ENCODE measurements at regions of chr21 and their contacts with region 1.

Region 1: DNA sequence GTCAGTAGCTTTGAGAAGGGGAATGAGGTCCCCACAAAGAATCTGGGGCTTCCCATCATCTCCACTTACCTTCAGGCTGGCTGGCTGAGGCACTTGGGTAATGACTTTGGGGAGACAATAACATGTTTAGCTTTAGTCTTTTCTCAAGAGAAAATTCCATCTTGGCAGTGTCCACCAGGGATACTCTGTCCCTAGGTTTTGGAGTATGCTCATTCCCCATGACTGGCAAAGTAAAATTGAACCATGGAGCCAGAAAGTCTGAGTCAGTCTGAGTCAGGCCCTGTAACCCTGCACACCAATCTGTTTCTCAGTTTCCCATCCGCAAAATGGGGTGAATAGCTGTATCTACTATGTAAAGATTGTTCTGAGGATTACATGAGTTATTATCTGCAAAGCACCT is 28.2 kb downstream of the RUNX1 start:
- DNase-seq: no peak
- H3K4me3 ChIP-seq: no peak overlapping the region
- H3K27ac ChIP-seq: peak overlapping the region; percentile 25 to 35
- H3K4me1 ChIP-seq: peaks cover 32 to 86% (median 50%) of the 10 kb centered on the region in 4 experiments
- H3K27me3 ChIP-seq: no peaks in the 10 kb centered on the region

Region 2: DNA sequence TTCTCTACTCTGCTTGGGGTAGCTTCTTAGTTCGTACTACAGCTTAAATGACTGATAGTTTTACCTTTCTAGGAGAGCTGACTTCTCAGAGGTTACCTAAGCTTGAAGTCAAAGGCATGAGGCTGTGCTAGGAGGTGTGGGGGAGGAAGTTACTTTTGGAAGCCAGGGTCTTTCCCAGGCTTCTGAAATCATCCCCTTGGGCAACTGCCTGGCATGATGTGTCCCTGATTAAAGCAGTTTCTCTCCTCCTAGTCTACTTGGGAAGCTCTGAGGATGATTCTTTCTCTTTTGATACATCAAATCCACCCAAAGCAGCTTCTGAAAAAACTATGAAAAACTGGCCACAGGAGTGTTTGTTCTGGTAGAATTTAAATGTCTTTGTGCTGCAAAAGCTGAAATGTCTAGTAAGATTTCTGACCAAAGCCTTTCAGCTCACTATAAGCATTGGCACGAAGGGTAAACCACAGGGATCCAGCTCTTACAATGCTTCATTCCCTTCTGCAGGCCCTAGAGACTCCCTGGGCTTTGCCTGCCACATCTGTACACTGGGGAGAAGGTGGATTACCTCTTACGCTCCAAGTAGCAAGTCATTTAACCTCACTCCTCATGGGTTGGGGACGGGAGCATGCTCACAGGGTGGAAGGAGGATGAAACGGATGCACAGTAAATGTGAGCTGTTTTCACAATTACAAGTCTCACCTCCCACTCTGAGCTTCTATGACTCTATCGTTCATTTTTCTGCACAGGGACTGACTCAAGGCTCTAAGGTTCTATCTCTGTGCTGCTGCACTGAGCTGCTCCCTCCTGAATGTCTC is 31.4 kb before region 1 on chr21:
- CTCF ChIA-PET with region 1: interaction called, 10 read pairs
- POLR2A ChIA-PET with region 1: no interaction called
- DNase-seq: no peak
- H3K4me3 ChIP-seq: no peak overlapping the region
- H3K27ac ChIP-seq: peak overlapping the region in 1 of 2 experiments; percentile 18
- H3K4me1 ChIP-seq: peaks cover 4 to 86% (median 75%) of the 10 kb centered on the region in 4 experiments
- H3K27me3 ChIP-seq: no peaks in the 10 kb centered on the region

Measured in common myeloid progenitor, CD34-positive (primary cell).